ENCODE measurements at regions of chr9 and their contacts with region 1.

Region 1: GRCh38 chr9:37480759-37481158 is 5.0 kb upstream of the POLR1E start:
- DNase-seq: no peak
- ATAC-seq: no peak
- H3K4me3 ChIP-seq: no peak overlapping the region
- H3K27ac ChIP-seq: no peak overlapping the region
- H3K4me1 ChIP-seq: no peaks in the 10 kb centered on the region
- H3K27me3 ChIP-seq: no peaks in the 10 kb centered on the region

Region 2: DNA sequence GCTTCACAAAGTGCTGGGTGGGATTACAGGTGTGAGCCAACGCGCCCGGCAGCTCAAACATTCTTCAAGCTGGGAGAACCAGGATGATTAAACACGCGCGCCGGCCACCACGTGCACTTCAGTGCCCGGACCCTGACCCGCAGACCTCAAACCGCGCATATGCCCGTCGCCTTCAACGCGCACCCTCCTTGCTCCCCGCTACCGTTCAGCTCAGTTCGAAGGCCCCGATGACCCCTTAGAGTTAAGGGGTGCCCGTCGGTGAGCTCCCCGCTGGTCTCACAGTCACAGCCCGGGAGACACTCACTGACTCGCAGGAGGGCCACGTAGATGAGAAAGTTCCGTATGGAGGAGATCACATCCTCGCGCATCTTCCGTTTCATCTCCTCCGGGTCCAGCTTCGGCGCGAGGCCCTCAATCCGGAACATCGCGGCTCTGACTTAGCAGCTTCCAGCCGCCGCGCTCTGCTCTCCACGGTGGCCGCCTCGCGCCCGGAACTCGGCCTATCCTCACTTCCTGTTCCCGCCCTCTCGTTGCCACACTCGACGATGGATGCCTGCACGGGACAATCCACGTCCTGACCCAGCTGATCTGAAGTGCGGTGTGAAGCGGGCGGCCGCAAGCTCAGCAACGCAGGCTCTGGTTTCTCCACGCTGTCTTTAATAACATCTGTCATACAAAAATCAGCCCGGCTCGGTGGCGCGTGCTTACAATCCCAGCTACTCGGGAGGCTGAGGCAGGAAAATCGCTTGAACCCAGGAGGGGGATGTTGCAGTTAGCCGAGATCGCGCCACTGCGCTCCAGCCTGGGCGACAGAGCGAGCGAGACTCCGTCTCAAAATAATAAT is 111.6 kb after region 1 on chr9 and contains the start of gene TOMM5:
- intact Hi-C with region 1: loop called in 1 of 4 experiments (anchors 5 kb)
- DNase-seq: peak; percentile 94 to 97 (median 96)
- ATAC-seq: peak; percentile 97 to 99
- H3K4me3 ChIP-seq: peak within 1 kb of the TSS; percentile 93
- H3K27ac ChIP-seq: peak within 1 kb of the TSS; percentile 69
- H3K4me1 ChIP-seq: peaks cover 5% of the 10 kb centered on the region
- H3K27me3 ChIP-seq: no peaks in the 10 kb centered on the region
- total RNA-seq, gene TOMM5: 53.4 to 61.6 (median 57.6) TPM